ENCODE measurements at regions of chr17 and their contacts with region 1.

Region 1: GRCh38 chr17:19648475-19649406 is at the start of gene ALDH3A2:
- DNase-seq: peak; percentile 92 to 96
- ATAC-seq: peak; percentile 88 to 91
- H3K4me3 ChIP-seq: peak within 1 kb of the TSS; percentile 75 to 93 (median 84)
- H3K27ac ChIP-seq: peak within 1 kb of the TSS; percentile 92 to 97 (median 96)
- H3K4me1 ChIP-seq: peaks cover 50 to 52% of the 10 kb centered on the region in 2 donors
- H3K27me3 ChIP-seq: no peaks in the 10 kb centered on the region
- CTCF ChIP-seq: peak in 4 of 5 experiments; percentile 10 to 43 (median 34)
- POLR2A ChIP-seq: peak; percentile 91 to 93
- total RNA-seq, gene ALDH3A2: 87.6 to 117 (median 98.2) TPM

Region 2: DNA sequence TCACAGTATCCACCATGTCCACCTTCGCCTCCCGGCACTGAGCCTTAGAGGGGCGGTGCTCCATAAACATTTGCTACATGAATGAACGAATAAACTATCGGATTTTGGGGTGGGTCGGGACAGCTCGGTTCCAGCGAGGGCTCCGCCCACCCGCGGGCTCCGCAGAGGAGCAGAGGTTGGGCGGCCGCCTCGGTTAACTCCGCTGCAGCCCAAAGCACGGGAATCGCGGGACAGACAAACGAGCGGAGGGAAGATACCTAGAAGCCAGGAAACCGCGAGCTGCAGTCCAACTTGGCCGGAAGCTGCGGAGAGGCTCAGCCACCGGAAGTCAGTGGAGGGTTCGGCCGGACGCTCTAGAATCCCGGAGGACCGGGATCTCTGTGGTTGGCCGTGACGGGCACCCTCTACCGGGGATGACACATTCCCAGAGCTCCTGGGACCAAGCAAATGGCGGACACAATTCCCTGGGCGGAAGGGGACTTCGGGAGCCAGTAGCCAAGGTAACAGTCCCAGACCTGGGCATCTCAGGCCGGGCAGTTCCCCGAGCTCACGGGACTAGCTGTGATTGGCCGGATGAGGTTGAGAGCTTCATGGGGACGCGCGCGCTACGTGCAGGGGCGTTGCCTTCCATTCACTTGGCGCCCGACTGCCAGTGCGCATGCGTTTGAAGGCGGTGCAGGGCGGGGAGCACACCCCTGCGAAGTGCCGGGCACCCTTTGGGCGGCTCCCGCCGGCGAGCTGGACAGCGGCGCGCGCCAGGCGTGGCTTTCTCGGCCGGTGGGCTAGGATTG is 270.9 kb before region 1 on chr17:
- in situ Hi-C with region 1: loop called in 1 of 4 experiments (anchors 25 kb)
- intact Hi-C with region 1: loop called (anchors 5 kb)
- DNase-seq: peak; percentile 97 to 99
- ATAC-seq: peak; percentile 91 to 93
- H3K4me3 ChIP-seq: peak overlapping the region; percentile 64 to 98 (median 83)
- H3K27ac ChIP-seq: peak overlapping the region; percentile 83 to 97 (median 94)
- H3K4me1 ChIP-seq: peaks cover 7 to 16% of the 10 kb centered on the region in 2 donors
- H3K27me3 ChIP-seq: no peaks in the 10 kb centered on the region
- CTCF ChIP-seq: no peak
- POLR2A ChIP-seq: peak; percentile 75 to 91

Region 3: GRCh38 chr17:19513897-19514488 is 134.7 kb before region 1 on chr17:
- in situ Hi-C with region 1: loop called (anchors 10 to 25 kb)
- intact Hi-C with region 1: loop called (anchors 2 kb)
- DNase-seq: peak in 1 of 2 donors; percentile 65
- ATAC-seq: peak; percentile 88 to 94
- H3K4me3 ChIP-seq: peak overlapping the region in 2 of 4 donors; percentile 19 to 24
- H3K27ac ChIP-seq: peak overlapping the region; percentile 46 to 76 (median 62)
- H3K4me1 ChIP-seq: peaks cover 3 to 5% of the 10 kb centered on the region in 2 donors
- H3K27me3 ChIP-seq: no peaks in the 10 kb centered on the region
- CTCF ChIP-seq: peak; percentile 90 to 94 (median 93)
- POLR2A ChIP-seq: no peak

Region 4: DNA sequence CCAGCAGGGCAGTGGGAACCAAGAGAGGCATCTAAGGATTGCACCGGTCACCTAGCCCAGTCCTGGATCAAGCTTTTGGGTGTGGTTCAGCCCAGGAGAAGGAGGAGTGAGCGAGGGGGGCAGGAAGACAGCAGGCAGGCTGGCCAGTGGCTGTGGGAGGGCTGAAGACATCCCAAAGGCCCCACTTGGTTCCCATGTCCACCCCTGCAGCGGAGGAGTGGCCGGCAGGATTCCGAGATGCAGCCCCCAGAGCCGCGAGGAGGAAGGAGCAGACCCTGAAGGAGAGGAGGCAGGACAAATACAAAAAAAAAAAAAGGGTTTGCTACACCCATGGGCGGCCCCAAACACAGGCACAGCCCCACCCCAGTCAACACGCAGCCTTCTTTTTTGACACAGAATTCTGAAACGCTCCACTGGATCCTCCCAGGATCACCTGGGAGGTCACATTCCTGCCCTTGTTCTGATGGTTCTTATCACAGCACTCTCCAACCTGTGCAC is 68.7 kb after region 1 on chr17:
- in situ Hi-C with region 1: no loop called
- intact Hi-C with region 1: no loop called
- DNase-seq: no peak
- ATAC-seq: no peak
- H3K4me3 ChIP-seq: no peak overlapping the region
- H3K27ac ChIP-seq: no peak overlapping the region
- H3K4me1 ChIP-seq: peaks cover 0 to 4% of the 10 kb centered on the region in 2 donors
- H3K27me3 ChIP-seq: no peaks in the 10 kb centered on the region
- CTCF ChIP-seq: no peak
- POLR2A ChIP-seq: no peak

Region 5: GRCh38 chr17:19728079-19728495 is 79.3 kb after region 1 on chr17:
- in situ Hi-C with region 1: no loop called
- intact Hi-C with region 1: loop called (anchors 1 kb)
- DNase-seq: peak; percentile 88 to 92
- ATAC-seq: peak; percentile 83 to 84
- H3K4me3 ChIP-seq: no peak overlapping the region
- H3K27ac ChIP-seq: peak overlapping the region; percentile 91 to 98 (median 94)
- H3K4me1 ChIP-seq: peaks cover 34 to 39% of the 10 kb centered on the region in 2 donors
- H3K27me3 ChIP-seq: no peaks in the 10 kb centered on the region
- CTCF ChIP-seq: no peak
- POLR2A ChIP-seq: no peak

Region 6: GRCh38 chr17:19766422-19767270 is 117.9 kb after region 1 on chr17:
- in situ Hi-C with region 1: loop called in 2 of 4 experiments (anchors 5 to 10 kb)
- intact Hi-C with region 1: no loop called
- DNase-seq: peak; percentile 44 to 70
- ATAC-seq: peak; percentile 93 to 94
- H3K4me3 ChIP-seq: no peak overlapping the region
- H3K27ac ChIP-seq: no peak overlapping the region
- H3K4me1 ChIP-seq: no peaks in the 10 kb centered on the region
- H3K27me3 ChIP-seq: no peaks in the 10 kb centered on the region
- CTCF ChIP-seq: peak; percentile 87 to 99 (median 94)
- POLR2A ChIP-seq: no peak

Region 7: GRCh38 chr17:19830061-19830460 is 181.3 kb after region 1 on chr17:
- in situ Hi-C with region 1: no loop called
- intact Hi-C with region 1: no loop called
- DNase-seq: no peak
- ATAC-seq: no peak
- H3K4me3 ChIP-seq: no peak overlapping the region
- H3K27ac ChIP-seq: no peak overlapping the region
- H3K4me1 ChIP-seq: no peaks in the 10 kb centered on the region
- H3K27me3 ChIP-seq: no peaks in the 10 kb centered on the region
- CTCF ChIP-seq: no peak
- POLR2A ChIP-seq: no peak